ENCODE measurements at regions of chr12 and their contacts with region 1.

Region 1: DNA sequence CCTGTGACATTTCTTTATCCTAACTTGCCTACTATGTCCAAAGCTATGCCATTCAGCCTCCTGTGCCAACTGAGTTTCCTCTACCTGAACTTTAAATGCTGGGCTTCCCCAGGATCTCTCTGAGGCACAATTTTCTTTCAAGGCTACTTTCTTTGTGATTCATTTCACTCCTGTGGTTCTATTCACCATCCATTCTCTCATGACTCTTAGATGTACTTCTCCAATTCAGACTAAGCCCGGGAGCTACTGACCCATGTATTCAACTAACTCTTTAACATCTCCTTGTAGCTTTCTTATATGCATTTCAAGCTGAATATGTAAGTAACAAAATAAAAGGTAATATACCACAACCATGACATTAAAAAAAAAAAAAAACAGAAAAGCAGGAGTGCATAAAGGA is 738.9 kb upstream of the USP15 start:
- DNase-seq: no peak
- H3K4me3 ChIP-seq: no peak overlapping the region
- H3K27ac ChIP-seq: peak overlapping the region; percentile 97
- H3K4me1 ChIP-seq: peaks cover 87% of the 10 kb centered on the region
- CTCF ChIP-seq: no peak

Region 2: DNA sequence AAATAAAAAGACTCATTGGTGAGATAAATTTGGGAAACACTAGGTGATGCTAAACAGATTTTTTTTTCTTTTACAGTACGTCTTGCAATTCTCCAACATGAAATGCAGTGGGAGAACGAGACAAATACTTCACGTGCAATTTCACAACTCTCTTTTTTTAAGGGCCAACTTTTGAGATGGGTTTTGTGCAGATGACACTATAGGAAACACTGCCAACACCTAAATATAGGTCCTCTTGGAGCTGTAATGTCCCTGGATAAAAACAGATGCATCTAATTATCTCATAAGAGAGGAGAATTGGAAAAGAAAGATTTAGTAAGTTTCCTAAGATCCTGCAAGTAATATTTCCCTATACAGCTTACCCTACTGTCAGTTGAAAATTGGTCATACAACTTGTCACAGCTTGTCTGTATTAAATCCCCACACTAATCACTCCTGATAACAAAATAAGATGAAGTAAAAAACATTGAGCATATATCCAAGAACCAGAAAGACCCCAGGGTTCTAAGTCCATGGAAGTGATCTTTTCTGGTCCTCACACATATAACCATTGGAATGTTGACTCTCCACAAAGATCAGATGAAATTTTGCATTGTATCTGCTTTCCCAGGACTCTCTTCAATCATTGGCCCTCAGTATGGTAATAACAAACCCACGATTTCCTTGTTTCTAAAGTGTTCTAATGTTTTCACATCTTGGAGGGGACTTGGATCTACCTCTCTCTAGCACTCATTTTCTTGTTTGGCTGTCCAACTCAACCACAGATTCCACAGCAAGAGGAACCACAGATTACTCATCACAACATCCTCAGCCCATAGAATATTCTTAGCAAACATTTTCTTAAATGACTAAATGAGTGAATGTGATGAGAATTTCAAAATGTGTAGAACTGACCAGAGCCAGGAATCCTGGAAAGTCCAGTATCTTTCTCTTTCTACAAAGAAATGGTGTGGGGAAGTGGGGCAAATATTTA is 30.4 kb before region 1 on chr12:
- CTCF ChIA-PET with region 1: no interaction called
- POLR2A ChIA-PET with region 1: interaction called, 14 read pairs
- intact Hi-C with region 1: loop called (anchors 5 kb)
- DNase-seq: no peak
- H3K4me3 ChIP-seq: no peak overlapping the region
- H3K27ac ChIP-seq: no peak overlapping the region
- H3K4me1 ChIP-seq: peaks cover 9% of the 10 kb centered on the region
- CTCF ChIP-seq: no peak

Region 3: DNA sequence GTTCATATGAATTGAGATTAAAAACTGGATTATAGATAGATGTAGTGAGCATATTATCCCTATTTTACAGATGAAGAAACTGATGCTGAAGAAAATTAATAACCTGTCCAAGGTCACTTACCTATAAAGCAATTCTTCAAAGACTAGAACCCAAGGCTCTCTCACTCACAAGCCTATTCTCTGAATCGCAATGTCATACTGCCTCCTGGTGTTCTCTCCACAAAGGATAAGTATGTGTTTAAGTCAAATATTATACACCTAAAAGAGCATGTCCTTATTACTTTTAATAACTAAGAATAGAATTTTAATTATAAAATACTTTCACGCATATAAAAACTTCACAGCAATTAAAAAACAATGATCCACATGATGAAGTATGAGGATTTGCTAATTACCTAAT is 17.7 kb after region 1 on chr12:
- CTCF ChIA-PET with region 1: no interaction called
- POLR2A ChIA-PET with region 1: interaction called, 40 read pairs
- intact Hi-C with region 1: no loop called
- DNase-seq: peak; percentile 70
- H3K4me3 ChIP-seq: no peak overlapping the region
- H3K27ac ChIP-seq: no peak overlapping the region
- H3K4me1 ChIP-seq: peaks cover 11% of the 10 kb centered on the region
- CTCF ChIP-seq: peak; percentile 85

Region 4: GRCh38 chr12:62282057-62282774 is 761.0 kb after region 1 on chr12:
- CTCF ChIA-PET with region 1: no interaction called
- POLR2A ChIA-PET with region 1: no interaction called
- intact Hi-C with region 1: no loop called
- DNase-seq: no peak
- H3K4me3 ChIP-seq: no peak overlapping the region
- H3K27ac ChIP-seq: no peak overlapping the region
- H3K4me1 ChIP-seq: no peaks in the 10 kb centered on the region
- CTCF ChIP-seq: no peak

Region 5: DNA sequence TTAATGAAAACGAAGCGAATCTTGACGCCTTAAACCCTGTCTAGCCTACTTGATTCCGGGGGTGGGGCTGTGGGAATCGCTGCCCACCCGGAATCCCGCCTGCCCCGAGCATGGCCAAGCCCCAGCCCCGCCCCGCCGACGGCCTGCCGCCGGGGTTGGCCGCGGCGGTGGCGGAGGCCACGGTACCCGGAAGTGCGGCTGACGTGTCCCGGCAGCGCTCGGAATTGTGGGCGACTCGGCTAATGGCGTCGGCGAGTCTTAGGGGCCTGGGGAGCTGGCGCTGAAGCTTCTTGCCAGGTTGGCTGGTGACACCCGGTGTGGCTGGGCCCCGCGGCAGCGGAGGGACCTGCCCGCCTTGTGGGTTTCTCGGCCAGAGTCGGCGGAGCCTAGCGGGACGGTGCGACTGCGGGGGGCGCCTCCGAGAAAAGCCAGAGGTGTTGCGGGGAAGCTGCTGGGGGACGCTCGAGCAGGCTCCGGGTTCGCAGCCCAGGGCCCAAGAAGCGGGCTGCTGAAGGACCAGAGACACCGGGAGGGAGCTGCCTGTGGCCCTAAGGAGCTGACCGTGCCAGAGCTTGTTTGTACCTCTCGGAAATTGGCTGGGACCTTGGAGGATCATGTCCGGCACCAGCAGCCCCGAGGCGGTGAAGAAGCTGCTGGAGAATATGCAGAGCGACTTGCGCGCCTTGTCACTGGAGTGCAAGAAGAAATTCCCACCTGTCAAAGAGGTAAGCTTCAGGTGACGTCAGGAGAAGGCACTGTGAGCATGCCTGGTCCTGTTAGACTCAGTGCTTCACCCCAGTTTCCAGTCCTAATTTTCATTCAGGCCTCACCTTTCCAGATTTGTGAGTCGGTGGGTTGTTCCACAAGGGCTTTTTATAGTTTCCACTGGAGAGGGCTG is 945.6 kb after region 1 on chr12 and contains the start of gene MON2:
- CTCF ChIA-PET with region 1: no interaction called
- POLR2A ChIA-PET with region 1: no interaction called
- intact Hi-C with region 1: loop called (anchors 10 kb)
- DNase-seq: peak; percentile 89
- H3K4me3 ChIP-seq: peak within 1 kb of the TSS; percentile 99
- H3K27ac ChIP-seq: peak within 1 kb of the TSS; percentile 71
- H3K4me1 ChIP-seq: peaks cover 19% of the 10 kb centered on the region
- CTCF ChIP-seq: 0 out of 2 replicates have a peak, but pooled peaks have one; percentile 12
- total RNA-seq, gene MON2: 26.6 and 31.6 TPM in 2 replicates

Measured in OCI-LY7 (cell line).